WTC11 (cell line): ENCODE measurements at regions of chr20 and their contacts with region 1.

Region 1: GRCh38 chr20:49541733-49542513 is 26.0 kb downstream of the PTGIS start:
- DNase-seq: peak; percentile 79
- ATAC-seq: peak; percentile 72
- H3K4me3 Mint-ChIP-seq: no peak overlapping the region
- H3K27ac Mint-ChIP-seq: no peak overlapping the region
- H3K4me1 Mint-ChIP-seq: peaks cover 3% of the 10 kb centered on the region; the same call in 1 of the 2 replicates
- H3K27me3 Mint-ChIP-seq: no peaks in the 10 kb centered on the region
- CTCF ChIP-seq: peak; percentile 85

Region 2: DNA sequence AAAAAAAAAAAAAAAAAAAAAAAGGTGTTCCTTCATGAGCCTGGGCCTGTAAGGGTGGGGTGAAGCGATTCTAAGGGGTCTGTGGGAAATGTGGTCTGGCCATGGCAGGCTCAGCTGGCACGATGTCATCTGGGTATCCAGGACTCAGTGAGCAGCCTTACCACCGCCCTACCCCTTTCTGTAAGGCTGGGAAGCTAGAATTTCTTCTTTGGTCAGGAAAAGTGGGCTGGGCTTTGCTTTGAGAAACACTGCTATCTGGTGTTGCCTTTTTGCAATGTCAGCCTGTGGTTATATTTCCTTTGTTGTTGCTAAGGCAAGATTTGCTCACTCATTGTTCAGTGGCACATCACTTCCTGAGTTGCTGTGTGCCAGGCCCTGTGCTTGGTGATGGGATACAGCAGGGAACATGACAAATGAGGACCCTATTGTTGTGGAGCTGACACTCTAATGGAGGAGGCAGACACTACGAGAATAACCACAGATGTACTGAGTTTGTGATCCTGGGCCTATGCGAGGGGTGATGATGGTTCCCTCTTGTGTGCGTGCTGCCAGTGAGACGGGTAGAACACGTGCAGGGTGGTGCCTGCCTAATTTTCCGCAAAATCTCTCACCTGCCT is 218.2 kb before region 1 on chr20:
- CTCF ChIA-PET with region 1: interaction called, 10 read pairs
- POLR2A ChIA-PET with region 1: no interaction called
- DNase-seq: no peak
- ATAC-seq: peak; percentile 25
- H3K4me3 Mint-ChIP-seq: no peak overlapping the region
- H3K27ac Mint-ChIP-seq: no peak overlapping the region
- H3K4me1 Mint-ChIP-seq: peaks cover 32% of the 10 kb centered on the region
- H3K27me3 Mint-ChIP-seq: peaks cover 21% of the 10 kb centered on the region
- CTCF ChIP-seq: no peak

Region 3: GRCh38 chr20:49384437-49385088 is 157.4 kb before region 1 on chr20:
- CTCF ChIA-PET with region 1: interaction called, 16 read pairs
- POLR2A ChIA-PET with region 1: no interaction called
- DNase-seq: peak; percentile 97
- ATAC-seq: peak; percentile 79
- H3K4me3 Mint-ChIP-seq: no peak overlapping the region
- H3K27ac Mint-ChIP-seq: 0 out of 2 replicates have a peak overlapping the region, but pooled peaks have one; percentile 1
- H3K4me1 Mint-ChIP-seq: peaks cover 29% of the 10 kb centered on the region
- H3K27me3 Mint-ChIP-seq: no peaks in the 10 kb centered on the region
- CTCF ChIP-seq: peak; percentile 91

Region 4: GRCh38 chr20:49457444-49457843 is 84.5 kb before region 1 on chr20:
- CTCF ChIA-PET with region 1: no interaction called
- POLR2A ChIA-PET with region 1: no interaction called
- DNase-seq: no peak
- ATAC-seq: no peak
- H3K4me3 Mint-ChIP-seq: no peak overlapping the region
- H3K27ac Mint-ChIP-seq: no peak overlapping the region
- H3K4me1 Mint-ChIP-seq: no peaks in the 10 kb centered on the region
- H3K27me3 Mint-ChIP-seq: peaks cover 4% of the 10 kb centered on the region; the same call in 1 of the 2 replicates
- CTCF ChIP-seq: no peak

Region 5: DNA sequence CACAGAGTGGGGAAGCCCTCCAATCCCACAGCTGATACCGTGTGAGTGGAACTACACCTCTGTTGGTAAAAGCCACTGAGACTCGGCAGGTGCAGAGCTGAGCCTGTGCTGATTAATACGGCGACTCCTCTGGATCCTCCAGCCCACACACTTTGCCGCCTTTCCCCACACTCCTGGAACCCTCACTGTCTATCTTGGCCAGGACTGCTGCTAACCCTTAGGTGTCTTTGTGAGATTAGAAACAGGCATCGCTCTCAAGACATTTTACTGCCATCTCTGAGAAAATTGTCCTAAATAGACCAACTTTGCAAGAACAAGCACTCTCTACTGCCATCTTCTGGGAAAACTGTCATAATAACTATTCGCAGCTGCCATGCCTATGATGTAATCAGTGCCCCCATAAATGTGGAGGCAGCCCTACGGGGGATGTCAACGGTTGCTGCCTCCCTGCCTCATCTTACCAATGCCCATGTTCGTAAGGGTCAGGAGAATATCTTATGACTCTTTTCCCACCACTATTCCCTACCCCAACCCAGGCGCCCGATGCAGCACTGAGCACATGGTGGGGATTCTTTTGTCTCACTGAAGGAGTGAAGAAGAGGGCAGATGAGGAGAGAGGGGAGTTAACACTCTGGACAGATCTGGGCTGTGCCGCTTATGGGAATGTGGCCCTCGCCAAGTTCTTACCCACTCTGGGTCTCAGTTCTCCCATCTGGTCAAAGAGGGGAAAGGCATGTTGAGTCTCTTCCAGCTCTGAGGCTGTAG is 33.3 kb before region 1 on chr20:
- CTCF ChIA-PET with region 1: interaction called, 21 read pairs
- POLR2A ChIA-PET with region 1: no interaction called
- DNase-seq: no peak
- ATAC-seq: peak; percentile 75
- H3K4me3 Mint-ChIP-seq: no peak overlapping the region
- H3K27ac Mint-ChIP-seq: no peak overlapping the region
- H3K4me1 Mint-ChIP-seq: 0 out of 2 replicates have a peak, but pooled peaks cover under 1% of the 10 kb centered on the region
- H3K27me3 Mint-ChIP-seq: no peaks in the 10 kb centered on the region
- CTCF ChIP-seq: peak; percentile 43

Region 6: GRCh38 chr20:49567421-49568334 is 25.8 kb after region 1 on chr20 and contains the start of gene PTGIS:
- CTCF ChIA-PET with region 1: interaction called, 32 read pairs
- POLR2A ChIA-PET with region 1: no interaction called
- DNase-seq: peak; percentile 82
- ATAC-seq: peak; percentile 73
- H3K4me3 Mint-ChIP-seq: peak within 1 kb of the TSS; percentile 83
- H3K27ac Mint-ChIP-seq: peak within 1 kb of the TSS; percentile 84
- H3K4me1 Mint-ChIP-seq: peaks cover 48% of the 10 kb centered on the region
- H3K27me3 Mint-ChIP-seq: no peaks in the 10 kb centered on the region
- CTCF ChIP-seq: no peak
- total RNA-seq, gene PTGIS: 24.3 to 37.0 TPM (median 34.4 TPM) in 3 replicates

Region 7: DNA sequence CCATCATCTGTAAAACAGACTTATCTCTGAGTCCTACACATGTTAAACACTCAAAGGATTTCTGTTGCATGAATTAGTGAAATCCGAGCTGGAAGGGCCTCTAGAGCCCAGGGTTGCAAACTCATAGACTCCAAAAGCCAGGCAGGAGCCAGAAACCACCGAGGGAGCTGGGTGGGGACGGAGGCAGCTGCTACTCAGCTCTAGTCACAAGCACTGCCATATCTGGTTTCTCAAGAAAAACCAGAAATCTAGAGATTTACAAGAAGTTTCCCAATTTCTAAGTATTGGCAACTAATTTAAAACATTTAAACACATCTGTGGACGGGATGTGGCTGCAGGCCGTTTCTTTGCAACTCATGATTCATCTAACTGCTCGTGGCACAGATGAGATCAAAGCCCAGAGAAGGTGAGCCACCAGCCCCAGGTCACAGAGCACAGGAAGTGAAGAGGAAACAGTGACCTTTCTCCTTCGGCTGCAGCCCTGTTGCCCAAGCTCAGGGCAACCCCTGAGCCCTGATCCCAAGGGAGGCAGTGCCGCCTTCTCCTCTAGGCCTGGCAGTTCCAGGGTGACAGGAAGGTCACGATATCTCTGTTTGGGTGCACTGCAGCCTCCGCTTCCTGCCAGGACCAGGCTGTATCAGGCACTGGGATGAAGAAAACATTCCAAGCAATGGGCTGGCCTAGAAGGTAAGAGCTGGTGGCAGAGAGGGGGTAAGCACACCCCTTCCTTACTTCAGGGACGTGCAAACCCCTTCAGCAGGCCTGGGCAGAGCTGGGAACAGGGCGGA is 52.4 kb after region 1 on chr20:
- CTCF ChIA-PET with region 1: interaction called, 32 read pairs
- POLR2A ChIA-PET with region 1: no interaction called
- DNase-seq: no peak
- ATAC-seq: no peak
- H3K4me3 Mint-ChIP-seq: no peak overlapping the region
- H3K27ac Mint-ChIP-seq: no peak overlapping the region
- H3K4me1 Mint-ChIP-seq: peaks cover 6% of the 10 kb centered on the region; the same call in 1 of the 2 replicates
- H3K27me3 Mint-ChIP-seq: no peaks in the 10 kb centered on the region; the same call in none of the 2 replicates
- CTCF ChIP-seq: no peak

Region 8: GRCh38 chr20:49768204-49769047 is 226.5 kb after region 1 on chr20:
- CTCF ChIA-PET with region 1: no interaction called
- POLR2A ChIA-PET with region 1: no interaction called
- DNase-seq: peak; percentile 34
- ATAC-seq: peak; percentile 93
- H3K4me3 Mint-ChIP-seq: peak overlapping the region; percentile 15
- H3K27ac Mint-ChIP-seq: peak overlapping the region; percentile 100
- H3K4me1 Mint-ChIP-seq: peaks cover 61% of the 10 kb centered on the region
- H3K27me3 Mint-ChIP-seq: peaks cover 8% of the 10 kb centered on the region
- CTCF ChIP-seq: no peak

Region 9: GRCh38 chr20:49888345-49888966 is 346.5 kb after region 1 on chr20:
- CTCF ChIA-PET with region 1: interaction called, 29 read pairs
- POLR2A ChIA-PET with region 1: no interaction called
- DNase-seq: peak; percentile 89
- ATAC-seq: peak; percentile 83
- H3K4me3 Mint-ChIP-seq: no peak overlapping the region
- H3K27ac Mint-ChIP-seq: peak overlapping the region; percentile 90
- H3K4me1 Mint-ChIP-seq: peaks cover 37% of the 10 kb centered on the region
- H3K27me3 Mint-ChIP-seq: no peaks in the 10 kb centered on the region
- CTCF ChIP-seq: peak; percentile 84